ENCODE measurements at regions of chr12 and their contacts with region 1.

Region 1: GRCh38 chr12:120879102-120879501 is 25.1 kb downstream of the SPPL3 start:
- DNase-seq: no peak
- ATAC-seq: peak; percentile 34; the same call in 1 of the 3 replicates
- H3K4me3 ChIP-seq: no peak overlapping the region
- H3K27ac ChIP-seq: no peak overlapping the region
- H3K4me1 ChIP-seq: 0 out of 5 replicates have a peak, but pooled peaks cover 0 to 4% of the 10 kb centered on the region in 2 experiments
- H3K27me3 ChIP-seq: no peaks in the 10 kb centered on the region
- CTCF ChIP-seq: no peak
- EP300 ChIP-seq: no peak
- POLR2A ChIP-seq: no peak
- RAD21 ChIP-seq: no peak

Region 2: GRCh38 chr12:120892265-120892664 is 13.2 kb after region 1 on chr12:
- CTCF ChIA-PET with region 1: no interaction called
- POLR2A ChIA-PET with region 1: interaction called, 11 read pairs
- in situ Hi-C with region 1: no loop called
- intact Hi-C with region 1: no loop called
- DNase-seq: peak in 2 of 4 experiments; percentile 58
- ATAC-seq: peak; percentile 73
- H3K4me3 ChIP-seq: no peak overlapping the region
- H3K27ac ChIP-seq: peak overlapping the region; percentile 37; the same call in 1 of the 3 replicates
- H3K4me1 ChIP-seq: peaks cover 23 to 26% of the 10 kb centered on the region in 2 experiments; a peak in 4 of 5 replicates
- H3K27me3 ChIP-seq: no peaks in the 10 kb centered on the region
- CTCF ChIP-seq: no peak
- EP300 ChIP-seq: no peak
- POLR2A ChIP-seq: no peak
- RAD21 ChIP-seq: no peak